ENCODE measurements at regions of chr7 and their contacts with region 1.

Region 1: DNA sequence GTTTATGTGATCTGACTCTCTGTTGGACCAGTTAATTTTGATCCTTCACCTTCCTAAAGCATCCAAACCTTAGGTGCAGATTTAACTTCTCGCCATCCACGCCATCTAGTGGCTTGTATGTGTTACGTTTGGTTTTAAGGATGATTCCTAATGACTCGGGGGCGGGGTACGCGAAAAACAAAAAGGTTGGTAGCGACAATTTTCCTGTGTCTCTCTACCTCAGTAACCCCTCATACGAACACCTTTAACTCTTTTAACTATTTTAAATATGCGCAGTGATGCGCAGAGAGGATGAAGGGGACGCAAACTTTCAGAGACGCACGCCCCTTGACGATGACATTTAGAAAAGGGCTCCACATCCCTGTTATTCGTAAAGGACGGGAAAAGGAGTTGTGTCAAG is 714 bp upstream of the KCND2 start:
- DNase-seq: no peak

Region 2: DNA sequence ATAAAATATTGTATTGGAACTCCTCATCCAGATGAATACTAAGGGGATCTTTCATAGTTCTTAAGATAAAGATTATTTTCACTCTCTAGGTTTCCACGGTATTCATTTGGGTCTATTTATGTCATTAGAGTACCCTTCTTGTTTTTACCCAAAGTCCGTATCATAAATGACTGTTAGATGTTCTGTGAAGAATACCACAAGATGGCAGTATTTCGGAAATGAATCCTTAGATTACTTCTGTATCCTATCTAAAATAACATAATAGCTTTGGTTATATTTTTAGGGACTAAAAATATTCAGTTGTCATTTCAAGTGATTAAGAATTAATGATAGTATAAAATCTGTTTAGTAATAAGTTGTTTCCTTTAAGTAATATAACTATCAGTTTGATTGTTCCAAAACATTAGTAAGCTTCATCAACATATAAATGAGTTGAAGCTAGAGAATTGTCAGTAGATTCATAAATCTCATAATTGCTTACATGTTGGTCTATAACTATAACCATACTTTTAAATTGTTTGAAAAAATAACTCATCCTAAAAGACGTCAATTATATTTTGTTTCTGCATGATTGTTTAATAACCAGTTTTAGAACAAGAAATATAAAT is 336.7 kb before region 1 on chr7:
- intact Hi-C with region 1: loop called (anchors 2 kb)
- DNase-seq: no peak

Region 3: GRCh38 chr7:120185940-120186682 is 86.2 kb before region 1 on chr7:
- intact Hi-C with region 1: no loop called
- DNase-seq: no peak

Region 4: DNA sequence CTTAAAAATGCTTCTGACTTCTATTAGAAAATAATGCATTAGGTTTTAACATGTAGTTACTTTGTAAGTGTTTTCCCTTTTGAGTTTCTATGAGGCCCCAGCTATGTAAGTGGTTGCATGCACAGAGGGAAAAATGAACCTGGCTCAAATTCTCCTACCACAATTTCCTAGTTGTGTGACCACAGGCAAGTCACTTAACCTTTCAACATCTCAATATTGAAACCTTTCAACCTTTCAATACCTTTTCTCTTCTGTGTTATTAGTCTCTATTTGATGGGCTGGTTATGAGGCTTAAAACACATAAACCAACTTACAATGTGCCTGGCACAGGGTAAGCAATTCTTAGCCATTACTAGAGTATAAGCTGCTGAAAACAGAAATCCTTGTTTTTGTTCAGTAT is 203.7 kb after region 1 on chr7:
- intact Hi-C with region 1: no loop called
- DNase-seq: no peak

Region 5: DNA sequence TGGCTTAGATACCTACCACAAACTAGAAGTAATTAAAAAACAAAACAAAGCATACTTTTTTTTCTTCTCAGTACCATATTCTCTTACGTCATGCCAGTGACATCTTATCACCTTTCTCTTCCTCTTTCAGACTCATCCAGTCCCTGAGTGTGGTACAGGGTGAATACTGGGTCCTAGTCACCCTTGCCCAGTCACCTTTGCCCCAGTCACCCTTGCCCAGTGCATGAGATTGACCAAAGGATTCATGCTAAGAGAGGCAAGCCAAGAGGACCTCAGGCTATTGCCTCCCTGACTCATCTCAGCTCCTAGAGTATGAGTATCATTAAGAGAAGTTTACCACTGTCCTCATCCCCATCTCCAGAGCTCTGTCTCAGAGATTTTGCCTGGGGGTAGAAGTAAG is 595.7 kb after region 1 on chr7:
- intact Hi-C with region 1: no loop called
- DNase-seq: no peak